Activated CD4-positive, alpha-beta memory T cell treated with anti-CD3 and anti-CD28 coated beads, Interleukin-2, amount 10 ng/mL, durations not matched to agents 7 days and 5 days (primary cell): ENCODE measurements at regions of chr3 and their contacts with region 1.

Region 1: GRCh38 chr3:107676469-107677309 is 153.9 kb downstream of the BBX start:
- DNase-seq: no peak
- H3K4me3 Mint-ChIP-seq: no peak overlapping the region
- H3K27ac Mint-ChIP-seq: no peak overlapping the region
- H3K4me1 Mint-ChIP-seq: peaks cover 13% of the 10 kb centered on the region
- H3K27me3 Mint-ChIP-seq: no peaks in the 10 kb centered on the region

Region 2: GRCh38 chr3:107660306-107660976 is 16.2 kb before region 1 on chr3:
- CTCF ChIA-PET with region 1: interaction called, 38 read pairs
- POLR2A ChIA-PET with region 1: interaction called, 3 read pairs
- DNase-seq: no peak
- H3K4me3 Mint-ChIP-seq: no peak overlapping the region
- H3K27ac Mint-ChIP-seq: no peak overlapping the region
- H3K4me1 Mint-ChIP-seq: peaks cover 16% of the 10 kb centered on the region
- H3K27me3 Mint-ChIP-seq: no peaks in the 10 kb centered on the region

Region 3: GRCh38 chr3:107740992-107741896 is 64.6 kb after region 1 on chr3:
- CTCF ChIA-PET with region 1: interaction called, 24 read pairs
- POLR2A ChIA-PET with region 1: no interaction called
- DNase-seq: no peak
- H3K4me3 Mint-ChIP-seq: no peak overlapping the region
- H3K27ac Mint-ChIP-seq: no peak overlapping the region
- H3K4me1 Mint-ChIP-seq: no peaks in the 10 kb centered on the region
- H3K27me3 Mint-ChIP-seq: no peaks in the 10 kb centered on the region